WTC11 (cell line): ENCODE measurements at regions of chr14 and their contacts with region 1.

Region 1: GRCh38 chr14:23631702-23632460 is 4.3 kb upstream of the DHRS2 start:
- DNase-seq: peak; percentile 90
- ATAC-seq: peak; percentile 86
- H3K4me3 Mint-ChIP-seq: no peak overlapping the region
- H3K27ac Mint-ChIP-seq: no peak overlapping the region
- H3K4me1 Mint-ChIP-seq: peaks cover 19% of the 10 kb centered on the region
- H3K27me3 Mint-ChIP-seq: peaks cover 3% of the 10 kb centered on the region
- CTCF ChIP-seq: peak; percentile 96

Region 2: GRCh38 chr14:23561259-23561658 is 70.6 kb before region 1 on chr14:
- CTCF ChIA-PET with region 1: no interaction called
- POLR2A ChIA-PET with region 1: no interaction called
- DNase-seq: no peak
- ATAC-seq: no peak
- H3K4me3 Mint-ChIP-seq: no peak overlapping the region
- H3K27ac Mint-ChIP-seq: no peak overlapping the region; the same call in 1 of the 2 replicates
- H3K4me1 Mint-ChIP-seq: peaks cover 40% of the 10 kb centered on the region
- H3K27me3 Mint-ChIP-seq: no peaks in the 10 kb centered on the region; the same call in 1 of the 2 replicates
- CTCF ChIP-seq: no peak

Region 3: DNA sequence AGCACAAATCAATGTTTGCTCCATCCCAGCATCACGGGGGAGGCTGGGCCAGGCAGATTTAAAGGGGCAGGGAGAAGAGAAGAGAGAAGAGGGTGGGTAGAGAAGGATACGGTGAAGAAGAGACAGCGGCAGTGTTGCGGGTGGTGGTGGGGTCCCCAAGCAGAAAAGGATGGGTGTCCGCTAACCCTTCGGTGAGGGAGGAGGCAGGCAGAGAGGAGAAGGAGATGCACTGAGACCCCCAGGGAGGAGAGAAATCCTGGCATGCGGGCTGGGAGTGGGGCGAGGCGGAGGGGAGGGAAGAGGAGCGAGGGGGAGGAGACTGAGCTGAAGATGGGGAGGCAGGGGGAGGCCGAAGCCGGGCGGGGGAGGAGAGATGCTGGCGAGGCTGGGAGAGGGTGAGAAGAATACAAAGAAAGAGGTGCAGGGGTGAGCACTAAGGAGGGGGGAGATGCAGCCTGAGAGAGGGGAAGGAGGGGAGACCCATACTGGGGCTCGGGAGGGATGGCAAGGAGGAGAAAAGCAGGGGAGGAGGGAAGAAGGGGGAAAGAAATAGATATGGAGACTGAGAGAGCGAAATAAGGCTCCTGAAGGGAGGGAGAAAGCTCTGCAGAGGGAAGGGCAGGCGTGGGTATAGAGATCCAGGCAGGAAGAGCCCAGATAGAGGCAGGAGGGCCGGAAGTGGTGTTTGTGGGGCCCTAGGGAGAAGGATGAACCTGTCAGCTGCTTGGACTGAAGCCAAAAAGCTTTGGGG is 53.1 kb before region 1 on chr14 and contains the start of gene JPH4:
- CTCF ChIA-PET with region 1: interaction called, 15 read pairs
- POLR2A ChIA-PET with region 1: interaction called, 3 read pairs
- DNase-seq: peak; percentile 69
- ATAC-seq: peak; percentile 30
- H3K4me3 Mint-ChIP-seq: peak within 1 kb of the TSS; percentile 73
- H3K27ac Mint-ChIP-seq: peak within 1 kb of the TSS; percentile 60; the same call in 1 of the 2 replicates
- H3K4me1 Mint-ChIP-seq: peaks cover 23% of the 10 kb centered on the region
- H3K27me3 Mint-ChIP-seq: peaks cover 36% of the 10 kb centered on the region
- CTCF ChIP-seq: no peak
- total RNA-seq, gene JPH4: 50.1 to 62.0 TPM (median 60.0 TPM) in 3 replicates

Region 4: GRCh38 chr14:23646648-23647549 is 15.0 kb after region 1 on chr14:
- CTCF ChIA-PET with region 1: interaction called, 75 read pairs
- POLR2A ChIA-PET with region 1: interaction called, 3 read pairs
- DNase-seq: no peak
- ATAC-seq: no peak
- H3K4me3 Mint-ChIP-seq: no peak overlapping the region
- H3K27ac Mint-ChIP-seq: no peak overlapping the region
- H3K4me1 Mint-ChIP-seq: no peaks in the 10 kb centered on the region
- H3K27me3 Mint-ChIP-seq: peaks cover 7% of the 10 kb centered on the region
- CTCF ChIP-seq: no peak

Region 5: GRCh38 chr14:23665375-23666192 is 33.7 kb after region 1 on chr14:
- CTCF ChIA-PET with region 1: interaction called, 69 read pairs
- POLR2A ChIA-PET with region 1: interaction called, 3 read pairs
- DNase-seq: peak; percentile 67
- ATAC-seq: peak; percentile 85
- H3K4me3 Mint-ChIP-seq: no peak overlapping the region
- H3K27ac Mint-ChIP-seq: no peak overlapping the region
- H3K4me1 Mint-ChIP-seq: peaks cover 5% of the 10 kb centered on the region
- H3K27me3 Mint-ChIP-seq: no peaks in the 10 kb centered on the region; the same call in 1 of the 2 replicates
- CTCF ChIP-seq: 0 out of 2 replicates have a peak, but pooled peaks have one; percentile 32

Region 6: DNA sequence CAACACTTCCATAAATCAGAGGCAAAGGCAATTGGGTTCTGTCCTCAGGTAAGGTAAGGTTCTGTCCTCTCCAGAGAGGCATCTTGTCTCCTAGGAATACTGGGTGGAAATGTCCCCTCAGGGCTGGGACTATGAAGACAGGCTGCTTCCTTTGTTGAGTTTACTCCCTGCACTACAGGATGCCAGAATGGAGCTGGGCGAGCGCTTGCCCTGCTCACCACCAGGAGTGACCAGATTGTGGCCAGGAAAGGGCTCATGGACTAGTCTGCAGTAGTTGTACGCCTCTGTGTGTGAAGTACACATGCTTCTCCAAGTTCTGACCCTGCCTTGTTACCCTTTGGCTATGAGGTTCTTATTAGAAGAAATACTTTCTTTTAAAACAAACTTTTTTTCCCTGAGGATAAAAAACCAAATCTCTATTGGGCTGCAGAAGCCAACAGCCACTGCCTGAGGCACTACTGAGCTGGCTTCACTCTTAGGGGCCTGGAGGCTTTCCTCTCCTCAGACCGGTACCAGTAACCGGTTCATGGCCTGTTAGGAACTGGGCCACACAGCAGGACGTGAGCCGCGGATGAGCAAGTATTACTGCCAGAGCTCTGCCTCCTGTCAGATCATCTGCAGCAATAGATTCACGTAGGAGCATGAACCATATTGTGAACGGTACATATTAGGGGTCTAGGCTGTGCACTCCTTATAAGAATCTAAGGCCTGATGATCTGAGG is 87.5 kb after region 1 on chr14:
- CTCF ChIA-PET with region 1: interaction called, 13 read pairs
- POLR2A ChIA-PET with region 1: no interaction called
- DNase-seq: no peak
- ATAC-seq: peak; percentile 53; the same call in 1 of the 2 replicates
- H3K4me3 Mint-ChIP-seq: no peak overlapping the region
- H3K27ac Mint-ChIP-seq: no peak overlapping the region
- H3K4me1 Mint-ChIP-seq: no peaks in the 10 kb centered on the region
- H3K27me3 Mint-ChIP-seq: no peaks in the 10 kb centered on the region; the same call in 1 of the 2 replicates
- CTCF ChIP-seq: no peak

Region 7: DNA sequence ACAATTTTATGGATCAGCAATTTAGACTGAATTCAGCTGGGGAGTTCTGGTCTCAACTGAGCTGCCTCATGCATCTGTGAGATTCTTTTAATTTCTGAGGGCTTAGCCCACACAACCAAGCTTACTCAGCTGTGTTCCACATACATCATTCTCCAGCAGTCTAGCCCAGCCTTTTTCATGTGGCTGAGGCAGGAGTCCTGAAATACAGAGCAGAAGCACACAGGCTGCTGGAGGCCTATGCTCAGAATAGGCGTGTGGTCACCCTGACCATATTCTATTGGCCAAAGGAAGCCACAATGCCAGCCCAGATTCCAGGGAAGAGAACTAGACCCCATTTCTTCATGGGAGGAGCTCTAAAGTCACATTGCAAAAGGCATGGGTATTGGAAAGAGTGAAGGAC is 249.4 kb after region 1 on chr14:
- CTCF ChIA-PET with region 1: interaction called, 25 read pairs
- POLR2A ChIA-PET with region 1: no interaction called
- DNase-seq: no peak
- ATAC-seq: no peak
- H3K4me3 Mint-ChIP-seq: no peak overlapping the region
- H3K27ac Mint-ChIP-seq: no peak overlapping the region
- H3K4me1 Mint-ChIP-seq: peaks cover 21% of the 10 kb centered on the region
- H3K27me3 Mint-ChIP-seq: peaks cover under 1% of the 10 kb centered on the region; the same call in 1 of the 2 replicates
- CTCF ChIP-seq: no peak

Region 8: DNA sequence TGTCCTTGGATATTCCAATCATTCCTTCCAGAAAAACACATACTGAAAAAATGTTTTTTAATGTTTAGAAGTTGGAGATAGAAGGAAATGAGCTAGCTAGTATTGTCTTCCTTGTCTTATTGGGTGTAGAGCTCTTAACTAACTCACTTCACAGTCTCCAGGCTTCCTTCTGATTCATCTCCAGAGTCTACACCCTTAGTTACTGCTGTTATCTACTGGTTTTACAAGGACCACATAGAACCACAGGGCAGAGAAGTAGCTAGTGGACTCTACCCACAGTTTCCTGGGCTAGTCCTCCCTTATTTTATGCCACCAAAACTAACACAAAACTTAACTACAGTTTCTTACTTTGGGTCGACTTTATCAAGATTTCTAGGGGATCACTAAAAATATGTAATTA is 290.7 kb after region 1 on chr14:
- CTCF ChIA-PET with region 1: interaction called, 14 read pairs
- POLR2A ChIA-PET with region 1: no interaction called
- DNase-seq: no peak
- ATAC-seq: no peak
- H3K4me3 Mint-ChIP-seq: no peak overlapping the region
- H3K27ac Mint-ChIP-seq: no peak overlapping the region
- H3K4me1 Mint-ChIP-seq: no peaks in the 10 kb centered on the region
- H3K27me3 Mint-ChIP-seq: peaks cover 2% of the 10 kb centered on the region; the same call in 1 of the 2 replicates
- CTCF ChIP-seq: no peak